GM10248 (cell line): ENCODE measurements at regions of chr11 and their contacts with region 1.

Region 1: GRCh38 chr11:20127671-20128527 is 32.4 kb downstream of the DBX1 start:
- DNase-seq: peak; percentile 70
- CTCF ChIP-seq: peak; percentile 91

Region 2: GRCh38 chr11:20102397-20102796 is 25.5 kb before region 1 on chr11:
- CTCF ChIA-PET with region 1: interaction called, 12 read pairs
- POLR2A ChIA-PET with region 1: no interaction called
- DNase-seq: no peak
- CTCF ChIP-seq: no peak

Region 3: GRCh38 chr11:20116825-20117224 is 11.1 kb before region 1 on chr11:
- CTCF ChIA-PET with region 1: interaction called, 91 read pairs
- POLR2A ChIA-PET with region 1: no interaction called
- DNase-seq: no peak
- CTCF ChIP-seq: no peak

Region 4: DNA sequence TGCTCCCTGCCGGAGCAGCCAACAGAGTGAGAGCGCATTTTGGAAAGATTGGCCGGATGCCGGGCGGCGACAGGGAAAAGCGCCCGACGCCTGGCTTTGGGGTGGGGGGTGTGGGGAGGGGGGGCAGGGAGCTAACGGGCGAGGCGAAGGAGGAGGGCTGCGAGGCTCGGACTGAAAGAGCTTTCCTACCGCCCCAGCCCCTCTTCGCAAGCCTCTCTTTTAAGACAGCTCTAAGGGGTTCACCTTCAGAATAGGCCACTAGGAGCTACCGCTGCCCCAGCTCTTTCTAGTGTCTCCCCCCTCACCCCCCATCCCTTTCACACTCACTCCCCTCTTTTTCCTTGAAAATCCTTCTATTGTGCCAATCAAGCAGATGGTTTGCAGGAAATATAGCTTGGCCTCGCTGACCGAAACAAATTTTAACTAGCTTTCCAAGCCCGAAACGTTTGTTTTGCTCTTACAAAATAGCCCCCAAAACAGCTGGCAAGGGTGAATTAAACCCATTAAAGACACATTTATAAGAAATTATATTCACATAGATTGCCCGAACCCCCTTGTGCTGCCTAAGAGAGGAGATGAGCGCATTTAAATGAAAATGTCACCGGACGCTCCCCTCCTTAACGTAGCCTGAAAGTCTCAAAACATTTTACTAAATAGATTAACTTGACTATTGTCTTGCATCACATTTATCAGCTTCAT is 36.0 kb after region 1 on chr11:
- CTCF ChIA-PET with region 1: interaction called, 13 read pairs
- POLR2A ChIA-PET with region 1: no interaction called
- DNase-seq: no peak
- CTCF ChIP-seq: no peak

Region 5: DNA sequence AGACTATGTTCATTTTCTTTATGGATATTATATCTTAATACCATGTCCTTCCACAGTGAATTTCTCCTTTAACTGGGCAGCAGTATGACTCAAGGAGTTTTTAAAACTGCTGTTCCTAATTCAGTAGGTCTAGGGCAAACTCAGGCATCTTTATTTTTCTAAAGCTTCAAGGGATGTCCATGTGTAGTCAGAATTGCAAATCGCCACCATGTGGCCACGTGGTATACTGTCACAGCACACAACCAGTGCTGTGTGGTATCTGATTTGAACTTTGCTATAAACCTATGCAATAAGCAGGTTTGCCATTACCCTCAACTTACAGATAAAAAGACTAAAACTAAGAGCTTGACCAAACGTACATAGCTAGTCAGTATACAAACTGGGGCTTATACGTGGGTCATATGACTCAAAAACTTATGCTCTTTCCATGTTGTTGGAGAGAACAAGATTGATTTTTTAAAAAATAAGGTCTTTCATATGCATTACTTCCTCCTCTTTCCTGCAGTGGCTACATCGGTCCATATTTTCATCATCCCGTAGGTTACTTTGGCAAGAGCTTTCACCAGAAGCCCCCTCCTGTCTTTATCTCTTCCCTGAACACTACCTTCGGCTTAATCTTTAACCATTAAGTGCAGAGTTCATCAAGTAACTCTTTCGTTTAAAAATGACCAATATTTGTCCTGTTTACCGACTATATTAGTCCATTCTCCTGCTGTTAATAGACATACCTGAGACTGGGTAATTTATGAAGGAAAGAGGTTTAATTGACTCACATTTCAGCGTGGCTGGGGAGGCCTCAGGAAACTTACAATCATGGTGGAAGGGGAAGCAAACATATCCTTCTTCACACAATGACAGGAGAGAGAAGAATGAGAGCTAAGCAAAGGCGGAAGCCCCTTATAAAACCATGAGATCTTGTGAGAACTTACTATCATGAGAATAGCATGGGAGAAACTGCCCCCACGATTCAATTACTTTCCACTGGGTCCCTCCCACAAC is 227.6 kb after region 1 on chr11:
- CTCF ChIA-PET with region 1: interaction called, 145 read pairs
- POLR2A ChIA-PET with region 1: no interaction called
- DNase-seq: peak; percentile 24
- CTCF ChIP-seq: peak; percentile 48

Region 6: GRCh38 chr11:20451568-20451967 is 323.7 kb after region 1 on chr11:
- CTCF ChIA-PET with region 1: no interaction called
- POLR2A ChIA-PET with region 1: no interaction called
- DNase-seq: no peak
- CTCF ChIP-seq: no peak

Region 7: DNA sequence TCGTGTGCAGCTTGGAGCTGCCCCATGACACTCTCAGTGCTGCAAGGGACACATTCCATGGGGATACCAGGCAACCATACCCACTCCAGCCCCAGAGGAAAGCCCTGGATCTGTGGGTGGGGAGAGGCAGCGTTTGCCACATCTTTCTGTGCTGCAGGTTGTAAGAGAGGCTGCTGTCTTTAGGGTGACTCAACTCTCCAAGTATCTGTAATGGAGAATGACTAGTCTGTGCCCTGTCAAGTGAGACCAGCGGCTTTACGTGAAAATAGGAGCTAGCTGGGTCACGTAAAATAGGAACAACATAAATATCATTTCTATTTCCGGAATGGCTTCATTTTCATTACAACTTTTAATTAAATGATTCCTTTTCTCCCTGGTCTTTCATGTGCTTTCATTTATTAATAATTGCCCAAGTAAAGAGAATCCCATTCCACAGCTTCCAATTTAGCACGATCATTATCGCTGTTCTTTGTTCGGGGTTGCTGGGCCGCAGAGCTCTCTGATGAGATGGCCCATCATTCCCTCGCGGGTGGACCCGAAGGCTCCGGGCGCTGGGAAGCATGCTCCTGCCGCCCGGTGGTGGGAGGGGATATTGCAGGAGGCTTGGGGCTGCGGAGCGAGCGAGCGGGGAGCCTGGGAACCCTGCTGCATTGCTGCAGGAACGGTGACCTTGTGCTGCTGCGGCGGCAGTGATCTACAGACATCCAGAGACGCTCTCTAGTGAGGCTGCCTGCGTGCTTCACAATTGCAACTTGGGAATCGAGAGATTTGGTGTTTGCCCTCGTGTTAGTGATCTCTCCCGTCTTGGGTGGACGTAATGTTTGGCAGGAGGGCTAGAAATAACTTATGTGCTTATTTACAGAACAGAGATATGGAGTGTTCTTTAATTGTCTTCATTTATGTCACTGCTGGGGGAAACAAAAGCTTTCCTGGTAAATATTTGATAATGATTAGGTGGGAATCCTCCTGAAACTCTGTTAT is 482.1 kb after region 1 on chr11:
- CTCF ChIA-PET with region 1: interaction called, 23 read pairs
- POLR2A ChIA-PET with region 1: no interaction called
- DNase-seq: peak; percentile 77
- CTCF ChIP-seq: peak; percentile 99